Prostate gland (tissue), 2 donors: ENCODE measurements at regions of chr3 and their contacts with region 1.

Region 1: DNA sequence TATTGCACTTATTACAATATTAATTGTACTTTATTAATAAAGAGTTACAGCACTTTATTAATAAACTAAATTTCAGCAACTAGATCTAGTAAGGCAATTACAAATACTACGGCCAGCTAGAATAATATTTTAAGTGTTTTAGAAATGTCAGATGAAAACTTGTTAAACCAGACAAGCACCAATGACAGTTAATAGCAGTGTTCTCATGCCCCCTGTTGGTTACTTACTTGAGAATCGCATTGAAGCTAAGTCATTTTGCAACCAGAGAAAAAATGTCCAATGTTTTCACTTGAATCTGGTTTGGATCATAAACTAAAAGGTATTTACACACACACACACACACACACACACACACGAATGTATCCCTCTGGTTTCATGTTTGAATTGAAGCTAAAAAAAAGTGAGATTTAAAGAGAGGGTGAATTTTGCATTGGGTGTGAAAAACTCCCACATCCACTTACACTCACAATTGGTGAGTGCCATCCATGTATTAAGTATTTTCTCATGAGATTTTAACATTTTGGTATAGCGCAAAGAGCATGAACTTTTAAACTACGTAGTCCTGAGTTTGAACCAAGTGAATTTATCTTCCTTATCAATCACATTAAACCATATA is 347.7 kb downstream of the ZBBX start:
- DNase-seq: peak; percentile 13
- H3K4me3 ChIP-seq: no peak overlapping the region
- H3K27ac ChIP-seq: no peak overlapping the region
- H3K4me1 ChIP-seq: no peaks in the 10 kb centered on the region
- H3K27me3 ChIP-seq: no peaks in the 10 kb centered on the region
- CTCF ChIP-seq: peak in 3 of 4 experiments; percentile 49 to 65 (median 64)
- POLR2A ChIP-seq: no peak

Region 2: DNA sequence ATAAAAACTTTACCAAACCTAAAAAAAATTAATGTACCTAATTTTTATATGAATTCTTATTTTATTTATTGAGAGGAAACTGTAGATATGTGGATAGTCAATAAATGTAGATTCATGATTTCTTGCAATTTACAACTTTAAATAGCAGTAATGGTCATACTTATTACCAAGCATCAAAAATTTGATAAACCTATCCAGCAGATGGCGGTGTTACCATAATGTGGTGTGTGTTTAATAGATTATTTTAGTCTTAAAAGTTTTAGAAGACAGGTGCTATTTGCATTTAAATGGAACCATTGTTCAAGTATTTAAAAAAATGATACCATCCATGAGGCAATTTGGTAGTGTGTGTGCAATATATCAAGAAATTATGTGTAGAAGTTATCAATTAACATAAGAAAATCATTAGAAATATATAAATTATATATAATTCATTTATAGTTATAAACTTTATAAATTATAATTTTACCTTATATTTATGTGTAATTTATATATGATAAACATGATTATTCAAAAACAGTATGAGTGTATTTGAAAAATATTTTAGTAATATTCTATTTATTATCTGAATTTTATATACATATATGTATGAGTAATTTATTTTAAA is 1019.2 kb before region 1 on chr3:
- intact Hi-C with region 1: loop called (anchors 10 kb)
- DNase-seq: no peak
- H3K4me3 ChIP-seq: no peak overlapping the region
- H3K27ac ChIP-seq: no peak overlapping the region
- H3K4me1 ChIP-seq: no peaks in the 10 kb centered on the region
- H3K27me3 ChIP-seq: no peaks in the 10 kb centered on the region
- CTCF ChIP-seq: peak in 3 of 4 experiments; percentile 42 to 51 (median 51)
- POLR2A ChIP-seq: no peak